A673 (cell line): ENCODE measurements at regions of chr12 and their contacts with region 1.

Region 1: GRCh38 chr12:12611512-12612306 is at the start of gene CREBL2:
- DNase-seq: peak; percentile 97
- H3K4me3 ChIP-seq: peak within 1 kb of the TSS; percentile 77
- H3K27ac ChIP-seq: peak within 1 kb of the TSS; percentile 87
- H3K4me1 ChIP-seq: peaks cover 5% of the 10 kb centered on the region
- H3K27me3 ChIP-seq: no peaks in the 10 kb centered on the region
- CTCF ChIP-seq: no peak
- total RNA-seq, gene CREBL2: 15.4 and 17.8 TPM in 2 replicates

Region 2: GRCh38 chr12:12661086-12661485 is 49.4 kb after region 1 on chr12:
- CTCF ChIA-PET with region 1: no interaction called
- POLR2A ChIA-PET with region 1: no interaction called
- intact Hi-C with region 1: loop called (anchors 2 kb)
- DNase-seq: no peak
- H3K4me3 ChIP-seq: no peak overlapping the region
- H3K27ac ChIP-seq: no peak overlapping the region
- H3K4me1 ChIP-seq: no peaks in the 10 kb centered on the region
- H3K27me3 ChIP-seq: no peaks in the 10 kb centered on the region
- CTCF ChIP-seq: no peak

Region 3: GRCh38 chr12:12704593-12705230 is 93.0 kb after region 1 on chr12:
- CTCF ChIA-PET with region 1: no interaction called
- POLR2A ChIA-PET with region 1: no interaction called
- intact Hi-C with region 1: loop called (anchors 5 kb)
- DNase-seq: peak; percentile 92
- H3K4me3 ChIP-seq: no peak overlapping the region
- H3K27ac ChIP-seq: no peak overlapping the region
- H3K4me1 ChIP-seq: peaks cover 12% of the 10 kb centered on the region
- H3K27me3 ChIP-seq: no peaks in the 10 kb centered on the region
- CTCF ChIP-seq: peak; percentile 89